PC-9 (cell line): ENCODE measurements at regions of chr1 and their contacts with region 1.

Region 1: DNA sequence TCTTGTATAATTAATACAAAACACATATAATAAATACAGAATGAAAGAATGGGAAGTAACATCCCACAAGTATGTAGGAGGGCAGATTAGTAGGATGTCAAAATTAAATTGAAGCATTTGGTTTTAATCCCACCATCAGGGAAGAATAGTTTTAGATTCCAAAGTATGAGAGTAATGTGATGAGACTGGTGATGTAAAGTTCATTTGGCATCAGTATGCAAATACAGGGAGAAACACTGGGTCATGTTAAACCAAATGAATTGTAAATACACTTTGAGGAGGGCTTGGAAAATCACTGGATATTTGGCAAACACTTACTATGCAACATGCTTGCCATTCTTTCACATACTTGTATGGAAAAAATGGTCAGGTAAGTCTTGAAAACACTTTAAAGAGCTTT is 358.8 kb downstream of the DPYD start:
- DNase-seq: no peak
- H3K4me3 ChIP-seq: no peak overlapping the region
- H3K27ac ChIP-seq: no peak overlapping the region
- H3K4me1 ChIP-seq: no peaks in the 10 kb centered on the region
- H3K27me3 ChIP-seq: no peaks in the 10 kb centered on the region
- CTCF ChIP-seq: no peak

Region 2: DNA sequence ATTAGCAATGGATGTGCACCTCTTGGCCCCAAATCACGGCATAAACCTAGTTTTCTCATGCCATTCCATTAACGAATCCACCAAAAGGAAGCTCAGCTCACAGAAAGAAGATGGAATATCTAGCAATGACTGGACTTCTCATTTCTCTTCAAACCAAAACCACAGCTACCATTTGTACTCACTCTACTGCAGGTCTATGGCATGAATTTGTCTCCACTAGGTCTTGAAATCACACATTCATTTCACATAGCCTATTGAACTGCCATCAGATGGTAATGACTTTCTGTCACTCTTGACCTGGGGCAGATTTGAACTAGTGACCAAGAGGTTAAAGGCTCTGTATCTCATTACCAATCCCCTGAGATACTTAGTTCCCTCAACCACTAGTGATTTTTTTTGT is 24.0 kb before region 1 on chr1:
- CTCF ChIA-PET with region 1: no interaction called
- POLR2A ChIA-PET with region 1: no interaction called
- intact Hi-C with region 1: no loop called
- DNase-seq: no peak
- H3K4me3 ChIP-seq: no peak overlapping the region
- H3K27ac ChIP-seq: no peak overlapping the region
- H3K4me1 ChIP-seq: no peaks in the 10 kb centered on the region
- H3K27me3 ChIP-seq: no peaks in the 10 kb centered on the region
- CTCF ChIP-seq: no peak

Region 3: GRCh38 chr1:97593192-97593591 is 31.1 kb after region 1 on chr1:
- CTCF ChIA-PET with region 1: no interaction called
- POLR2A ChIA-PET with region 1: no interaction called
- intact Hi-C with region 1: loop called (anchors 2 kb)
- DNase-seq: no peak
- H3K4me3 ChIP-seq: no peak overlapping the region
- H3K27ac ChIP-seq: no peak overlapping the region
- H3K4me1 ChIP-seq: no peaks in the 10 kb centered on the region
- H3K27me3 ChIP-seq: no peaks in the 10 kb centered on the region
- CTCF ChIP-seq: no peak